Activated CD4-positive, alpha-beta memory T cell treated with anti-CD3 and anti-CD28 coated beads, Interleukin-2, amount 10 ng/mL, durations not matched to agents 7 days and 5 days (primary cell): ENCODE measurements at regions of chr7 and their contacts with region 1.

Region 1: DNA sequence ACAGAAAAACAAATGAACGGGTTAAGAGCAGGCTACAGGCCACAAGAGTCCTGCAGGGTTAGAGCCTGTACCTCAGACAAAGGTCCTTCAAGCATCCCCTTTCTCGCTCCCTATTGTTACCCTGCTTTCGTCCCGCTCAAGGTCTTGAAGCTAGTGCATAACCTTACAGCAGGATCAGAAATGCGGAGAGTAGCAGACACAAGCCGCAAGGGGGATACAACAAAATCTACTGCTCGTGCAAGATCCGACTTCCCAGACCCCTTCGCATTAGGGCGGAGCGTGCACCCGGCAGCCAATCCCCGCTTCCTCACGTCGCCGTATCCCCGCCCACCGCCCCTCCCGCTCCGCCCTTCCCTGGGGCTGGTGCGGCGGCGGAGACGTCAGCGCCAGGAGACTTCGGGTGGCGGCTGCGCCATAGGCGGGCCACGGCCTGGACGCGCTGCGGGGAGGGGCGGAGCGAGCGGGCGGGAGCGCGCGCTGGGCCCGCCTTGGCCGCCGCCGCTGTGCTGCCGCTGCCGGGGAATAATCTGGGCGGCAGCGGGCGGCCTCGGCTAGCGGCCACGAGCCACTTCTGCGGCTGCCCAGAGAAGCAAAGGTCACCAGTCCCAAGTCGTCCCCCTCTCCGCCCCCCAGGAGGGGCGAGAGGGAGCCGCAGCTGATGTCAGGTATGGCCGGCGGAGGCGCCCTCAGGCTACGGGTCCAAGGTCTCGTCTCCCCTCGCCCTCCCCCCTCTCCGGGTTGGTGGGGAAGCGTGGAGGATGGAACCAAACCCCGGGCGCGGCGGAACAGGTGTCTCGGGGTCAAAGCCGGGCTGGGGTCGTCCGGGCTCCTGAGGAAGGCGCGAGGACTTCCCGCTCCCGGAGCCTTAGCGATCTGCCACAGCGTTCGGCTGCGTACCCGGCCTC is at the start of gene C1GALT1:
- DNase-seq: peak; percentile 97
- H3K4me3 Mint-ChIP-seq: peak within 1 kb of the TSS; percentile 93
- H3K27ac Mint-ChIP-seq: peak within 1 kb of the TSS; percentile 100
- H3K4me1 Mint-ChIP-seq: peaks cover 25% of the 10 kb centered on the region
- H3K27me3 Mint-ChIP-seq: no peaks in the 10 kb centered on the region
- total RNA-seq, gene C1GALT1: 63.4 to 64.1 TPM

Region 2: GRCh38 chr7:7138897-7139296 is 43.5 kb before region 1 on chr7:
- CTCF ChIA-PET with region 1: no interaction called
- POLR2A ChIA-PET with region 1: no interaction called
- DNase-seq: no peak
- H3K4me3 Mint-ChIP-seq: no peak overlapping the region
- H3K27ac Mint-ChIP-seq: no peak overlapping the region
- H3K4me1 Mint-ChIP-seq: peaks cover 3% of the 10 kb centered on the region
- H3K27me3 Mint-ChIP-seq: no peaks in the 10 kb centered on the region

Region 3: GRCh38 chr7:7157177-7157886 is 25.1 kb before region 1 on chr7:
- CTCF ChIA-PET with region 1: interaction called, 10 read pairs
- POLR2A ChIA-PET with region 1: interaction called, 131 read pairs
- DNase-seq: peak; percentile 84
- H3K4me3 Mint-ChIP-seq: peak overlapping the region; percentile 81
- H3K27ac Mint-ChIP-seq: peak overlapping the region; percentile 99
- H3K4me1 Mint-ChIP-seq: peaks cover 43% of the 10 kb centered on the region
- H3K27me3 Mint-ChIP-seq: no peaks in the 10 kb centered on the region

Region 4: DNA sequence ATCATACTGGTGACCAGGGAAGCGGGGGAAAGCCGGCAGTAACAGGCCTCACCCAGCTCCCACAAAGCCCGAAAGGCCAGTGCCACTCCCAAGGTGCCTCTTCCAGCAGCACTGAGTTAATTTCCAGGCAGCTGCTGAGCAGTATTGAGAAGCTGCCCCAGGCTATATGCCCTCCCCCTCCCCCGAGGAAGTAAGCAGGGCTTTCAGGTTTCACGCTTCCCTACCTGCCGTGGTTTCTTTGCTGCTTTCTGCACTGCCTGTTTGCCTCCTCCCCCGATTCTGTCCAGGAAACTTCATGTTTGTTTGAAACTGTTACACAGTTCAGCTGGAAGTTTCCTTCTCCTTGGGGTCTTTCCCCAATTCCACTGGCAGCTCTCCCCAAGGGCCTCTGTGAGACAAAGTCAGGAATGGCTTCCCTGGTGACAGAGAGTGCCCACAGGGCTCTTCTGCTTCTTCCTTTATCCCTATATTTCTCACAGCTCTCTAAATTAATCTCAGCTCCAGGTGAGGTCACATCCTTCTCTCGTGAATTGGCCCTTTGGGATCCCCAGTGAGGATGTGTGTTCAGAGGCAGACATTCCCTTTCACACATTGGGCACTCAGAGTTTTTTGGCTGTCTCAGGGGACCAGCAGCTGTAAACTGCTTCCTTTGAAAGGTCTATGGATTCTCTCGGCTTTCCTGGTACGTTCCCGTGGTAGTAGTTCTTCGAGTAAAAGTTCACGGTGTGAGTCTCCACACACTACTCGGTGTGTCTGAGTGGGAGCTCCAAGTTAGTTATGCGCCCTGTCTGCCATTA is 19.4 kb after region 1 on chr7:
- CTCF ChIA-PET with region 1: interaction called, 3 read pairs
- POLR2A ChIA-PET with region 1: interaction called, 17 read pairs
- DNase-seq: peak; percentile 49
- H3K4me3 Mint-ChIP-seq: no peak overlapping the region
- H3K27ac Mint-ChIP-seq: peak overlapping the region; percentile 47
- H3K4me1 Mint-ChIP-seq: peaks cover 67% of the 10 kb centered on the region
- H3K27me3 Mint-ChIP-seq: no peaks in the 10 kb centered on the region

Region 5: DNA sequence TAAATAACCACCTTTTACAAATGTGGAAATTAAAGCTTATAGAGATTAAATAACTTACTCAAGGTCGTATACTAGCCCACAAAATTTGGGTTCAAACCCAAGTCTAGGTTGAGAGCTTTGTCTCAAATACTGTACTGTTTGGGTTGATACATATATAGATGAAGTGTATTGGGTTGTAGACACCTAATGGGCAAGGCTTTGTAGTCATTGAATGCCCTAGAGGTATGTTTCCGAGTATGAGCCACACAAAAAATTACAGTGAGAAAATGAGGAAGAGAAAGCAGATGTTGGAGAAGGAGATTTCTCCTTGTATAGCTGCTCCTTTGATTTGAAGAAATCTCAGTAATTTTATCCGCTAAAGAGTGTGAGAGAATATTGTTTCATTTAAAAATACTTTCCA is 60.5 kb after region 1 on chr7:
- CTCF ChIA-PET with region 1: no interaction called
- POLR2A ChIA-PET with region 1: no interaction called
- DNase-seq: no peak
- H3K4me3 Mint-ChIP-seq: no peak overlapping the region
- H3K27ac Mint-ChIP-seq: no peak overlapping the region
- H3K4me1 Mint-ChIP-seq: peaks cover 6% of the 10 kb centered on the region
- H3K27me3 Mint-ChIP-seq: no peaks in the 10 kb centered on the region

Region 6: GRCh38 chr7:7257899-7258692 is 75.7 kb after region 1 on chr7:
- CTCF ChIA-PET with region 1: interaction called, 5 read pairs
- POLR2A ChIA-PET with region 1: interaction called, 51 read pairs
- DNase-seq: peak; percentile 19
- H3K4me3 Mint-ChIP-seq: peak overlapping the region; percentile 28
- H3K27ac Mint-ChIP-seq: peak overlapping the region; percentile 81
- H3K4me1 Mint-ChIP-seq: peaks cover 50% of the 10 kb centered on the region
- H3K27me3 Mint-ChIP-seq: no peaks in the 10 kb centered on the region

Region 7: GRCh38 chr7:7640221-7641128 is 458.1 kb after region 1 on chr7 and contains the start of gene UMAD1:
- CTCF ChIA-PET with region 1: no interaction called
- POLR2A ChIA-PET with region 1: interaction called, 27 read pairs
- DNase-seq: peak; percentile 99
- H3K4me3 Mint-ChIP-seq: peak within 1 kb of the TSS; percentile 90
- H3K27ac Mint-ChIP-seq: peak within 1 kb of the TSS; percentile 90
- H3K4me1 Mint-ChIP-seq: peaks cover 36% of the 10 kb centered on the region
- H3K27me3 Mint-ChIP-seq: no peaks in the 10 kb centered on the region
- total RNA-seq, gene UMAD1: 16.1 to 16.7 TPM